PC-3 (cell line): ENCODE measurements at regions of chr22 and their contacts with region 1.

Region 1: GRCh38 chr22:44080936-44081861 is 57.1 kb downstream of the PARVB start:
- DNase-seq: peak; percentile 58
- ATAC-seq: peak; percentile 51
- H3K4me3 ChIP-seq: no peak overlapping the region
- H3K27ac ChIP-seq: no peak overlapping the region
- H3K4me1 ChIP-seq: no peaks in the 10 kb centered on the region
- H3K27me3 ChIP-seq: no peaks in the 10 kb centered on the region
- CTCF ChIP-seq: peak; percentile 78

Region 2: GRCh38 chr22:43993027-43993760 is 88.0 kb before region 1 on chr22:
- CTCF ChIA-PET with region 1: interaction called, 65 read pairs
- POLR2A ChIA-PET with region 1: no interaction called
- intact Hi-C with region 1: loop called (anchors 1 kb)
- DNase-seq: peak; percentile 54
- ATAC-seq: peak; percentile 73
- H3K4me3 ChIP-seq: no peak overlapping the region
- H3K27ac ChIP-seq: no peak overlapping the region
- H3K4me1 ChIP-seq: peaks cover 14% of the 10 kb centered on the region
- H3K27me3 ChIP-seq: no peaks in the 10 kb centered on the region
- CTCF ChIP-seq: peak; percentile 92

Region 3: GRCh38 chr22:44026630-44027511 is 54.3 kb before region 1 on chr22:
- CTCF ChIA-PET with region 1: no interaction called
- POLR2A ChIA-PET with region 1: no interaction called
- intact Hi-C with region 1: loop called (anchors 10 kb)
- DNase-seq: no peak
- ATAC-seq: no peak
- H3K4me3 ChIP-seq: no peak overlapping the region
- H3K27ac ChIP-seq: no peak overlapping the region
- H3K4me1 ChIP-seq: peaks cover 13% of the 10 kb centered on the region
- H3K27me3 ChIP-seq: no peaks in the 10 kb centered on the region
- CTCF ChIP-seq: no peak

Region 4: DNA sequence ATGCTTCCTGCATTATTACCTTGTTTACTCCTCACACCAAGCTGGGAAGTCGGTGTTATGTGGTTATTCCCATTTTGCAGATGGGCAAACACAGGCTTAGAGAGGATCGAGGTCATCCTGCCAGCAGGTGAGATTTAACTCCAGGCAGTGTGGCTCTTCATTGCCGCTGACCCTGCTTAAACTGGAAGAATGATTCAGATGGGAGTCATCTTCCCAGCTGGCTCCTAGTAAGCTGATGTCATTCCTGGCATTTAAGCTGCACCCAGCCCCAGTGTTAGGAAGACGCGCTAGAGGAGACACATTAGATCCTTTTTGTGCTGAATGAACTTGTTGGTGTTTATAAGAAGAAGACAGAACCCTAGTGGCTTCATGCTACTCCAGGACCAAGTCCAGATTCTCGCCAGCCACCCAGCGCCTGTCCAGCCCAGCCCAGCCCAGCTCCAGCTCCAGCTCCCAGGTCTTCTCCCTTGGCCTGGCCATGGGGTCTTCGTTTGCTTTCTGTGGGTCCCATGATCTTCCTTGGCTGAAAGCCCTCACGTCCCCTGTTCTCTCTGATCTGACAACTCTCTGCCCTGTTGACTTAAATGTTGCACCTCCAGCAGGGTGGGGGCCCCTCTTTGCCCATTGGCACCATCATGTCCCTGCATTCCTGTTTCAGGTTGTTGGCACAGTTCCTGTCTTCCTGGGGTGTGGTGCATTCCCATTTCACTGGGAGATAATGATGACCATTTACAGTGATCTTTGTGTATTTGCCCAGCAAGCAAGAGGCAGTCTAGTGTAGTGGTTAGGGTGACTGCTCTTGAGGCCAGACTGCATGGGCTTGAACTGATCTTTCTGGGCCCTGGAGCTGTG is 43.5 kb before region 1 on chr22:
- CTCF ChIA-PET with region 1: no interaction called
- POLR2A ChIA-PET with region 1: no interaction called
- intact Hi-C with region 1: no loop called
- DNase-seq: peak; percentile 90
- ATAC-seq: peak; percentile 98
- H3K4me3 ChIP-seq: peak overlapping the region; percentile 59
- H3K27ac ChIP-seq: peak overlapping the region; percentile 90
- H3K4me1 ChIP-seq: peaks cover 7% of the 10 kb centered on the region
- H3K27me3 ChIP-seq: no peaks in the 10 kb centered on the region
- CTCF ChIP-seq: no peak

Region 5: GRCh38 chr22:44116755-44117684 is 35.8 kb after region 1 on chr22:
- CTCF ChIA-PET with region 1: no interaction called
- POLR2A ChIA-PET with region 1: no interaction called
- intact Hi-C with region 1: no loop called
- DNase-seq: no peak
- ATAC-seq: no peak
- H3K4me3 ChIP-seq: no peak overlapping the region
- H3K27ac ChIP-seq: no peak overlapping the region
- H3K4me1 ChIP-seq: no peaks in the 10 kb centered on the region
- H3K27me3 ChIP-seq: no peaks in the 10 kb centered on the region
- CTCF ChIP-seq: no peak